H1 (cell line): ENCODE measurements at regions of chr15 and their contacts with region 1.

Region 1: DNA sequence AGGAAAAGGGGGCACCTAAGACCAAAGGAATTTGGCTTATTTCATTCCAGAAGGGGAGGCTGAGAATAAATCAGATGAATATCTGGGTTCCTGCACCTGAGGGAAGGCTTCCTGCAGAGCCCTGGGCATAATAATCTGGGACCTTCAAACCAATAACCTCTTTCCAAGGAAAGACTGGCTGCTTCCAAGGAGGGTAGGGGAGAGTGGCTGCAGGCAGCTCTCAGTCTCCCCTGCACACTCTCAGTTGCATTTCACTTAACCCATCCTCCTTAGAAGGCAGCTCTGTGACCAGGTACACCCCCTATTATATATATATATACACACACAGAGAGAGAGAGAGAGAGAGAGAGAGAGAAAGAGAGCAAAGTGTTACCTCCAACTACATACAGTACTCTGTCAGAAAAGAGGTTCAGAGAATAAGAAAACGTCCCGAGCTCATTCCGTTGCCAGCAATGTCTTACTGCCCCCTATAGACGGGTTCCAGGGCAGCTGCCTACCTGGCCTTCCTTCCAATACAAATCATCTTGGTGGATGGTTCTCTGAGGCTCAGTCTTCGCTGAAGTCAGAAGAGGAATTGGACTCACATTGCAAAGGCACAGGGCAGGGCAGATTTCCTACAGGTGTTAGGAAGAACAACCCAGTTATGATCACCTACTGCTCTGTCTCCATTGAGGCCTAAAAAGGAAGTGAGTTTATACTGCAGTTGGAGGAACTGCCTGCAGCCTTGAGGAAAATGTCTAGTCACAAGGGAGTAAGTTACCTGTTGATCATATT is 26.1 kb downstream of the CAPN3 start:
- DNase-seq: peak; percentile 47 to 76
- H3K4me3 ChIP-seq: no peak overlapping the region
- H3K27ac ChIP-seq: no peak overlapping the region
- H3K4me1 ChIP-seq: peaks cover 0 to 12% (median 4%) of the 10 kb centered on the region in 4 experiments; a peak in 5 of 7 replicates
- H3K27me3 ChIP-seq: no peaks in the 10 kb centered on the region
- CTCF ChIP-seq: peak; percentile 75 to 95 (median 80)
- EP300 ChIP-seq: no peak
- POLR2A ChIP-seq: no peak
- RAD21 ChIP-seq: peak; percentile 92 to 93

Region 2: GRCh38 chr15:42226648-42227047 is 158.7 kb before region 1 on chr15:
- CTCF ChIA-PET with region 1: interaction called, 16 read pairs
- POLR2A ChIA-PET with region 1: no interaction called
- DNase-seq: no peak
- H3K4me3 ChIP-seq: no peak overlapping the region
- H3K27ac ChIP-seq: no peak overlapping the region
- H3K4me1 ChIP-seq: no peaks in the 10 kb centered on the region
- H3K27me3 ChIP-seq: no peaks in the 10 kb centered on the region
- CTCF ChIP-seq: no peak
- EP300 ChIP-seq: no peak
- POLR2A ChIP-seq: no peak
- RAD21 ChIP-seq: no peak

Region 3: GRCh38 chr15:42273102-42273899 is 112.1 kb before region 1 on chr15 and contains the starts of genes GANC and TMEM87A:
- CTCF ChIA-PET with region 1: interaction called, 6 read pairs
- POLR2A ChIA-PET with region 1: interaction called, 10 read pairs
- DNase-seq: peak; percentile 89 to 96
- H3K4me3 ChIP-seq: peak within 1 kb of the TSS; percentile 64 to 98 (median 92)
- H3K27ac ChIP-seq: peak within 1 kb of the TSS; percentile 99
- H3K4me1 ChIP-seq: peaks cover 0 to 10% (median 3%) of the 10 kb centered on the region in 4 experiments; a peak in 3 of 7 replicates
- H3K27me3 ChIP-seq: no peaks in the 10 kb centered on the region
- CTCF ChIP-seq: no peak
- EP300 ChIP-seq: 0 out of 3 replicates have a peak, but pooled peaks of 1 of the 2 experiments have one; percentile 2
- POLR2A ChIP-seq: peak; percentile 97 to 99
- RAD21 ChIP-seq: no peak
- total RNA-seq, gene GANC: 11.8 and 14.4 TPM in 2 replicates
- total RNA-seq, gene TMEM87A: 32.9 and 33.1 TPM in 2 replicates

Region 4: DNA sequence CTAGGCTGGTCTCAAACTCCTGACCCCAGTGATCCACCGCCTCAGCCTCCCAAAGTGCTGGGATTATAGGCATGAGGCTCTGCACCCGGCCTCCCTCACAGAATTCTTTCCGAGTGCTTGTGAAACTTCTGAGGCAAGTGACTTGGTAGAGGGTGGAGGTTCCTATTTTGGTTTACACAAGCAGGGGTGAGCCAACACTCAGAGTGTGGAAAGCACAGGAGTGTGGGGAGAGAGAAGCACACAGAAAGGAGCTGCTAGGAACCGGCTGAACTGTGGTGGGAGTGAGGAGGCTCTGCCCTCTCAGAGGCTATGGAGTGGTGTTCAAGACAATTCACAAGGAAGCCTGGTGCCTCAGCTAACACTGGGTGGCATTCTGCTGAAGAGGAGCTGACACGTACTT is 18.4 kb before region 1 on chr15:
- CTCF ChIA-PET with region 1: interaction called, 15 read pairs
- POLR2A ChIA-PET with region 1: interaction called, 3 read pairs
- DNase-seq: no peak
- H3K4me3 ChIP-seq: no peak overlapping the region
- H3K27ac ChIP-seq: no peak overlapping the region
- H3K4me1 ChIP-seq: peaks cover 0 to 10% (median 5%) of the 10 kb centered on the region in 4 experiments; a peak in 5 of 7 replicates
- H3K27me3 ChIP-seq: no peaks in the 10 kb centered on the region; a peak in 4 of 7 replicates
- CTCF ChIP-seq: no peak
- EP300 ChIP-seq: no peak
- POLR2A ChIP-seq: no peak
- RAD21 ChIP-seq: no peak

Region 5: GRCh38 chr15:42395838-42396237 is 10.4 kb after region 1 on chr15:
- CTCF ChIA-PET with region 1: interaction called, 34 read pairs
- POLR2A ChIA-PET with region 1: no interaction called
- DNase-seq: no peak
- H3K4me3 ChIP-seq: no peak overlapping the region
- H3K27ac ChIP-seq: no peak overlapping the region
- H3K4me1 ChIP-seq: no peaks in the 10 kb centered on the region
- H3K27me3 ChIP-seq: no peaks in the 10 kb centered on the region
- CTCF ChIP-seq: no peak
- EP300 ChIP-seq: no peak
- POLR2A ChIP-seq: no peak
- RAD21 ChIP-seq: no peak